B cell (primary cell): ENCODE measurements at regions of chr2 and their contacts with region 1.

Region 1: GRCh38 chr2:121519732-121520640 is 10.7 kb upstream of the RNU4ATAC start:
- DNase-seq: no peak
- ATAC-seq: no peak
- H3K4me3 ChIP-seq: no peak overlapping the region
- H3K4me3 Mint-ChIP-seq: no peak overlapping the region
- H3K27ac ChIP-seq: no peak overlapping the region
- H3K27ac Mint-ChIP-seq: no peak overlapping the region
- H3K4me1 ChIP-seq: no peaks in the 10 kb centered on the region
- H3K4me1 Mint-ChIP-seq: no peaks in the 10 kb centered on the region
- H3K27me3 ChIP-seq: no peaks in the 10 kb centered on the region
- H3K27me3 Mint-ChIP-seq: no peaks in the 10 kb centered on the region
- CTCF ChIP-seq: no peak

Region 2: GRCh38 chr2:121539750-121540469 is 19.9 kb after region 1 on chr2:
- CTCF ChIA-PET with region 1: no interaction called
- POLR2A ChIA-PET with region 1: interaction called, 11 read pairs
- intact Hi-C with region 1: no loop called
- DNase-seq: no peak
- ATAC-seq: no peak
- H3K4me3 ChIP-seq: no peak overlapping the region
- H3K4me3 Mint-ChIP-seq: no peak overlapping the region
- H3K27ac ChIP-seq: no peak overlapping the region
- H3K27ac Mint-ChIP-seq: no peak overlapping the region
- H3K4me1 ChIP-seq: peaks cover 4 to 8% of the 10 kb centered on the region in 2 donors
- H3K4me1 Mint-ChIP-seq: peaks cover 21% of the 10 kb centered on the region
- H3K27me3 ChIP-seq: no peaks in the 10 kb centered on the region
- H3K27me3 Mint-ChIP-seq: no peaks in the 10 kb centered on the region
- CTCF ChIP-seq: no peak